ENCODE measurements at regions of chr11 and their contacts with region 1.

Region 1: GRCh38 chr11:62705880-62706849 is 1.1 kb downstream of the BSCL2 start:
- DNase-seq: peak; percentile 96
- H3K4me3 Mint-ChIP-seq: peak overlapping the region; percentile 92
- H3K27ac Mint-ChIP-seq: peak overlapping the region; percentile 69
- H3K4me1 Mint-ChIP-seq: peaks cover 56% of the 10 kb centered on the region
- H3K27me3 Mint-ChIP-seq: no peaks in the 10 kb centered on the region

Region 2: DNA sequence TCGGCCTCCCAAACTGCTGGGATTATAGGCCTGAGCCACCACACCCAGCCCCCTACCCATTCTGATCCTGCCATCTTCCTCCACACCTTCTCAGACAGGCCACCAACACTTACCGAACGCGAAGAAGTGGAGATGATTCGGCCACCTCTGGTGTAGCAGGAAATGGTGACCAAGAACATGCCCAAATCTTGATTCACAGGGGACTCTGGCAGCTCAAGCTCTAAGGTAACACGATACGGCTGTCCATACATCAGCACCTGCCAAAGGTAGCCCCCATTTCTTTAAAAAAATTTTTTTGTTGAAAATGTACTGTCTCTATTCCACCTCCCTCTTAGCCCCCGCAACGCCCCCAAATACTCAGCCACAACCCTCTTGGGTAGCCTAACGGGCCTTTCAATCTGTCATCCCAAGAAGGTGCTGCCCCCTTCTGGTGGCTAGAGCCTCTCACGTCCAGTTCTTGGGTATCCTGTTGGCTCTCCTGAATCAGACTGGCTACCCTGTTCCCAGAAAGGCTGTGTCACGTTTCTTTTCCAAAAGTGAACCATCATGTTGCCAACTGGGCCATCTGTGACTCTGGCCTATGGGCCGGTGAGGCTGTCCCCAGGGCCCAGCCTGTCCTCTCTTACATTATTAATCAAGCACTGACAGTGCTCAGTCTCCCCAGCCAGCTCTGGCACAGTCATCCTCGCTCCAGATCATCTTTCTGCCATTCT is 11.6 kb before region 1 on chr11:
- CTCF ChIA-PET with region 1: interaction called, 11 read pairs
- POLR2A ChIA-PET with region 1: interaction called, 7 read pairs
- DNase-seq: peak; percentile 79
- H3K4me3 Mint-ChIP-seq: no peak overlapping the region
- H3K27ac Mint-ChIP-seq: no peak overlapping the region
- H3K4me1 Mint-ChIP-seq: peaks cover 7% of the 10 kb centered on the region
- H3K27me3 Mint-ChIP-seq: no peaks in the 10 kb centered on the region

Measured in activated CD4-positive, alpha-beta memory T cell treated with anti-CD3 and anti-CD28 coated beads, Interleukin-2, amount 10 ng/mL, durations not matched to agents 7 days and 5 days (primary cell).